ENCODE measurements at regions of chr3 and their contacts with region 1.

Region 1: GRCh38 chr3:12484198-12484974 is at the start of gene TSEN2:
- DNase-seq: peak; percentile 93 to 97
- H3K4me3 ChIP-seq: peak within 1 kb of the TSS; percentile 74
- H3K4me3 Mint-ChIP-seq: peak within 1 kb of the TSS; percentile 96
- H3K27ac Mint-ChIP-seq: peak within 1 kb of the TSS; percentile 98
- H3K4me1 ChIP-seq: peaks cover 18% of the 10 kb centered on the region
- H3K4me1 Mint-ChIP-seq: peaks cover 20% of the 10 kb centered on the region
- H3K27me3 ChIP-seq: no peaks in the 10 kb centered on the region
- H3K27me3 Mint-ChIP-seq: no peaks in the 10 kb centered on the region
- CTCF ChIP-seq: peak in 1 of 2 experiments; percentile 25
- total RNA-seq, gene TSEN2: 18.3 and 19.6 TPM in 2 replicates

Region 2: GRCh38 chr3:12175844-12176453 is 308.4 kb before region 1 on chr3:
- CTCF ChIA-PET with region 1: no interaction called
- POLR2A ChIA-PET with region 1: no interaction called
- intact Hi-C with region 1: loop called (anchors 2 kb)
- DNase-seq: peak; percentile 56 to 69
- H3K4me3 ChIP-seq: no peak overlapping the region
- H3K4me3 Mint-ChIP-seq: no peak overlapping the region
- H3K27ac Mint-ChIP-seq: no peak overlapping the region
- H3K4me1 ChIP-seq: peaks cover 3% of the 10 kb centered on the region; the same call in 1 of the 2 replicates
- H3K4me1 Mint-ChIP-seq: no peaks in the 10 kb centered on the region
- H3K27me3 ChIP-seq: no peaks in the 10 kb centered on the region
- H3K27me3 Mint-ChIP-seq: no peaks in the 10 kb centered on the region
- CTCF ChIP-seq: peak; percentile 82 to 85

Region 3: GRCh38 chr3:12224181-12225147 is 259.9 kb before region 1 on chr3:
- CTCF ChIA-PET with region 1: interaction called, 9 read pairs
- POLR2A ChIA-PET with region 1: interaction called, 4 read pairs
- intact Hi-C with region 1: loop called (anchors 5 kb)
- DNase-seq: peak; percentile 17 to 58
- H3K4me3 ChIP-seq: no peak overlapping the region
- H3K4me3 Mint-ChIP-seq: no peak overlapping the region
- H3K27ac Mint-ChIP-seq: no peak overlapping the region
- H3K4me1 ChIP-seq: peaks cover 58% of the 10 kb centered on the region
- H3K4me1 Mint-ChIP-seq: peaks cover 47% of the 10 kb centered on the region
- H3K27me3 ChIP-seq: no peaks in the 10 kb centered on the region
- H3K27me3 Mint-ChIP-seq: no peaks in the 10 kb centered on the region
- CTCF ChIP-seq: no peak

Region 4: DNA sequence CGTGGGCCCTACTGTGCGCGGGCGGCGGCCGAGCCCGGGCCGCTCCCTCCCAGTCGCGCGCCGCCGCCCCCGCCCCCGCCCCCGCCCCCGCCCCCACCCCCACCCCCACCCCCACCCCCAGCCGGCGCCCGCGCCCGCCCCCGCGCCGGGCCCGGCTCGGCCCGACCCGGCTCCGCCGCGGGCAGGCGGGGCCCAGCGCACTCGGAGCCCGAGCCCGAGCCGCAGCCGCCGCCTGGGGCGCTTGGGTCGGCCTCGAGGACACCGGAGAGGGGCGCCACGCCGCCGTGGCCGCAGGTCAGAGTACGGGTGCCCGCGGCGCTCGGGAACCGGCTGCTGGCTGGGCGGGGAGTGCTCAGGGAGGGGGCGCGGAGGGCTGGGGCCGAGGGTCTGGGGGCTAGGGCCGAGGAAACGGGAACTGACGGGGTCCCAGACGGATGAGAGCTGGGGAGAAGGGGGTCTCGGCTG is 196.6 kb before region 1 on chr3:
- CTCF ChIA-PET with region 1: no interaction called
- POLR2A ChIA-PET with region 1: interaction called, 3 read pairs
- intact Hi-C with region 1: loop called (anchors 1 kb)
- DNase-seq: peak; percentile 51 to 77
- H3K4me3 ChIP-seq: peak overlapping the region; percentile 92
- H3K4me3 Mint-ChIP-seq: peak overlapping the region; percentile 75
- H3K27ac Mint-ChIP-seq: no peak overlapping the region
- H3K4me1 ChIP-seq: peaks cover 7% of the 10 kb centered on the region
- H3K4me1 Mint-ChIP-seq: no peaks in the 10 kb centered on the region
- H3K27me3 ChIP-seq: no peaks in the 10 kb centered on the region
- H3K27me3 Mint-ChIP-seq: no peaks in the 10 kb centered on the region
- CTCF ChIP-seq: no peak

Region 5: GRCh38 chr3:12405432-12406272 is 78.7 kb before region 1 on chr3:
- CTCF ChIA-PET with region 1: no interaction called
- POLR2A ChIA-PET with region 1: no interaction called
- intact Hi-C with region 1: loop called (anchors 1 kb)
- DNase-seq: peak; percentile 84 to 94
- H3K4me3 ChIP-seq: no peak overlapping the region
- H3K4me3 Mint-ChIP-seq: peak overlapping the region; percentile 68
- H3K27ac Mint-ChIP-seq: peak overlapping the region; percentile 46
- H3K4me1 ChIP-seq: peaks cover 57% of the 10 kb centered on the region
- H3K4me1 Mint-ChIP-seq: peaks cover 25% of the 10 kb centered on the region
- H3K27me3 ChIP-seq: no peaks in the 10 kb centered on the region
- H3K27me3 Mint-ChIP-seq: no peaks in the 10 kb centered on the region
- CTCF ChIP-seq: no peak

Region 6: DNA sequence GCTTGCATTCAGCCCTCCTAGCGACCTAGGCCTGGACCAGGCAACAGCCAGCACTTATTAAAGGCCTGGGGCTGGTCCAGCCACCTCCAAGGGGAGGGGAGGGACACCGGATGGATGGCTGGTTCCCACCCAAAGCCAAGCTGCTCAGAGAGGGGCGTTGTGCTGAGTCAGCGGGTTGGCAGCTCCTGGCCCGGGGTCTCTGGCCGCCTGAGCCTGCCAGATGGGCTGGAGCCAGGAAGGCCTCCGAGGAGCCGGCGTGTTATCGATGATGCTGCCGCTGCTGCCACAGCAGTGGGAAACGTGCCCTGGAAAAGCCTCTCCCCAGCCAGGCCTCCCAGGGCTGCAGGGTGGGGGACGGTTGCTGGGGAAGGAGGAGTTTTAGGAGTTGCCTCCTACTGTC is 43.5 kb before region 1 on chr3:
- CTCF ChIA-PET with region 1: interaction called, 4 read pairs
- POLR2A ChIA-PET with region 1: interaction called, 7 read pairs
- intact Hi-C with region 1: loop called (anchors 1 kb)
- DNase-seq: no peak
- H3K4me3 ChIP-seq: no peak overlapping the region
- H3K4me3 Mint-ChIP-seq: no peak overlapping the region
- H3K27ac Mint-ChIP-seq: peak overlapping the region; percentile 50
- H3K4me1 ChIP-seq: peaks cover 30% of the 10 kb centered on the region
- H3K4me1 Mint-ChIP-seq: peaks cover 29% of the 10 kb centered on the region
- H3K27me3 ChIP-seq: no peaks in the 10 kb centered on the region
- H3K27me3 Mint-ChIP-seq: no peaks in the 10 kb centered on the region
- CTCF ChIP-seq: no peak

Region 7: GRCh38 chr3:12458901-12459558 is 25.4 kb before region 1 on chr3:
- CTCF ChIA-PET with region 1: no interaction called
- POLR2A ChIA-PET with region 1: no interaction called
- intact Hi-C with region 1: no loop called
- DNase-seq: no peak
- H3K4me3 ChIP-seq: no peak overlapping the region
- H3K4me3 Mint-ChIP-seq: no peak overlapping the region
- H3K27ac Mint-ChIP-seq: no peak overlapping the region
- H3K4me1 ChIP-seq: peaks cover 20% of the 10 kb centered on the region
- H3K4me1 Mint-ChIP-seq: no peaks in the 10 kb centered on the region
- H3K27me3 ChIP-seq: no peaks in the 10 kb centered on the region
- H3K27me3 Mint-ChIP-seq: no peaks in the 10 kb centered on the region
- CTCF ChIP-seq: no peak

Region 8: GRCh38 chr3:12495749-12496452 is 11.5 kb after region 1 on chr3:
- CTCF ChIA-PET with region 1: interaction called, 6 read pairs
- POLR2A ChIA-PET with region 1: interaction called, 10 read pairs
- intact Hi-C with region 1: no loop called
- DNase-seq: peak in 1 of 2 experiments; percentile 14
- H3K4me3 ChIP-seq: no peak overlapping the region
- H3K4me3 Mint-ChIP-seq: no peak overlapping the region
- H3K27ac Mint-ChIP-seq: no peak overlapping the region
- H3K4me1 ChIP-seq: peaks cover 12% of the 10 kb centered on the region; the same call in 1 of the 2 replicates
- H3K4me1 Mint-ChIP-seq: peaks cover 8% of the 10 kb centered on the region
- H3K27me3 ChIP-seq: no peaks in the 10 kb centered on the region
- H3K27me3 Mint-ChIP-seq: no peaks in the 10 kb centered on the region
- CTCF ChIP-seq: peak in 1 of 2 experiments; percentile 14